ENCODE measurements at regions of chr1 and their contacts with region 1.

Region 1: GRCh38 chr1:92831762-92832536 is at the start of gene RPL5:
- DNase-seq: peak; percentile 93 to 99 (median 97)
- ATAC-seq: peak; percentile 86
- H3K4me3 ChIP-seq: peak within 1 kb of the TSS; percentile 96 to 100
- H3K4me3 Mint-ChIP-seq: peak within 1 kb of the TSS; percentile 98
- H3K27ac ChIP-seq: peak within 1 kb of the TSS; percentile 84 to 98
- H3K27ac Mint-ChIP-seq: peak within 1 kb of the TSS; percentile 99
- H3K4me1 ChIP-seq: peaks cover 37% of the 10 kb centered on the region
- H3K4me1 Mint-ChIP-seq: peaks cover 49% of the 10 kb centered on the region
- H3K27me3 ChIP-seq: no peaks in the 10 kb centered on the region
- H3K27me3 Mint-ChIP-seq: no peaks in the 10 kb centered on the region
- CTCF ChIP-seq: peak; percentile 90
- total RNA-seq, gene RPL5: 1,826 to 1,914 TPM

Region 2: GRCh38 chr1:92298573-92299476 is 533.1 kb before region 1 on chr1 and contains the starts of genes GLMN and RPAP2:
- CTCF ChIA-PET with region 1: no interaction called
- POLR2A ChIA-PET with region 1: no interaction called
- intact Hi-C with region 1: loop called (anchors 5 to 10 kb)
- DNase-seq: peak; percentile 41 to 88 (median 68)
- ATAC-seq: peak; percentile 96
- H3K4me3 ChIP-seq: peak within 1 kb of the TSS; percentile 76 to 90
- H3K4me3 Mint-ChIP-seq: peak within 1 kb of the TSS; percentile 94
- H3K27ac ChIP-seq: peak within 1 kb of the TSS; percentile 74 to 93
- H3K27ac Mint-ChIP-seq: peak within 1 kb of the TSS; percentile 98
- H3K4me1 ChIP-seq: peaks cover 13% of the 10 kb centered on the region
- H3K4me1 Mint-ChIP-seq: peaks cover 52% of the 10 kb centered on the region
- H3K27me3 ChIP-seq: no peaks in the 10 kb centered on the region
- H3K27me3 Mint-ChIP-seq: no peaks in the 10 kb centered on the region
- CTCF ChIP-seq: no peak
- total RNA-seq, gene GLMN: 9.2 to 9.5 TPM
- total RNA-seq, gene RPAP2: 29.4 to 33.9 TPM

Region 3: DNA sequence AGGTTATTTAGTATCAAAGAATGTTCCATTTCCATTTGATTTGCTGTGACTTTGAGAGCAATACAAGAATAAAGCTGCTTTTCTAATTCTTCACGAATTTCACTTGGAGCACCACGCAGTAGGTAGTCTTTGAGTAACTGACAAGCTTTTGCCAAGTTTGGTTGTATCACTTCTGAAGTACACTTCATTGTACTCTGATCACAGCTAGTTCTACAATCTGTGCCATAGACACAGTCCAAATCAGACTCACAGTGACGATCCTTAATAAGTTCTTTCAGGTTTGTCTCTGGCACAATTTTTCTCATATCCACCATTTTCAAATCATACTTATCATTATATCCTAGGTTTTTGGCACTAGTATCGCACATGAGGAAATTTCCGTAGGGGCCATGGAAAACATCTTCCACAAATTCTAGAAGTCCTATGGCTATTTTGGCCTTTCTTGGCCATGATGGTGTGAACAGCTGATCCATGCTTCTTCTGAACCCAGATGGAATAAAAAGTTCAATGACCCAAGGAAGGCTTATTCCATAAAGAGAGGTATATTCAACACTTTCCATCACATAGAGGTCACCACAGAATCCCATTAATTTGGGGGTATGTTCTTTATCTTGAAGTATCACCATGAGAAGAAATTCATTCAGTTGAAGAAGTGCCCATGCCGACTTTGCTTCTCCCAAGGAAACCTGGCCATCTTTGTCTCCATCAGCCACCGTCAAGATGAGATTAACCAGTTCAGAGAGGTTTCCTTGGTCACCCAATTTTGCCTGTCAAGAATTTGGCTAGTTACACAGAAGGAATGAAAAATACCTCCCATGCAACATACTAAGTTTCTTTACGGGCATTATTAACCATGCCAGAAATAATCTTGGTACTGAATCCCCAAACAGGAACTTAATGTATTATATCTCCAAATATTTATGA is 11.7 kb after region 1 on chr1:
- CTCF ChIA-PET with region 1: interaction called, 15 read pairs
- POLR2A ChIA-PET with region 1: interaction called, 12 read pairs
- intact Hi-C with region 1: no loop called
- DNase-seq: no peak
- ATAC-seq: no peak
- H3K4me3 ChIP-seq: no peak overlapping the region
- H3K4me3 Mint-ChIP-seq: no peak overlapping the region
- H3K27ac ChIP-seq: no peak overlapping the region
- H3K27ac Mint-ChIP-seq: peak overlapping the region; percentile 22
- H3K4me1 ChIP-seq: peaks cover 12% of the 10 kb centered on the region
- H3K4me1 Mint-ChIP-seq: peaks cover 24% of the 10 kb centered on the region
- H3K27me3 ChIP-seq: no peaks in the 10 kb centered on the region
- H3K27me3 Mint-ChIP-seq: no peaks in the 10 kb centered on the region
- CTCF ChIP-seq: no peak

Region 4: DNA sequence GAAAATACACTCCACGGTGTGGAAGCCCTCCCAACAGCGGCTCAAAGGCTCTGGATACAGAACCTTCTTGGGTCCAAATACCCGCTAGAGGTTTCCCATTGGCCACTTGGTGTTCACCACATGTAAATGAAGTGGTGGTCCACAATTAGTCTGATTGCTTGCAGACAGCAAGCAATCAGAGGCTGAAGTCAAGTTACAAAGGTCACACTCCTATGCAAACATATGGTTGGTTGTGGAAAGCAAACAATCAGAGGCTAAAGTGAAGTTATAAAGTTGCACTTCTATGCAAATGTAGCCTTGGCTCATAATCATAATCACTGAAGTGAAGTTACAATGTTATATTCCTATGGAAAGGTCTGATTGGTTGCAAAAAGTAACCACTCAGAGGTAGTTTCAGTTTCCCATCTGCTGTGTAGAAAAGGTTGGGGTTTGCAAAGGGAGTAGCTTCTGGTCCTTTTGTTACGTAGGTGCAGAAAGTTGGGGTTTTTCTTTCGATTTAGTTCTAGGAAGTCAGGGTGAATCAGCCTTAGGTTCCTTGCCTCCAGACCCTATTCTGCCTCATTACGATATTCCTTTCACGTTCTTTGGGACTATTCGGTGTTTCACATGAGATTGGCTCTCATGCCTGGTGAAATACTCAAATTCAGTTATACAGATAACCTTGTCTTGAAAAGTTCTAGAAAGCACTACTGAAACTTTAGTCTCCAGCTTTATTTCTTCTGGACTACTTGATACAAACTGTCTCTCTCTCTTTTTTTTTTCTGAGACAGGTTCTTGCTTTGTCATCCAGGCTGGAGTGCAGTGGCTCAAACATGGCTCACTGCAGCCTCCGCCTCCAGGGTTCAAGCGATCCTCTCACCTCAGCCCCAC is 210.5 kb after region 1 on chr1:
- CTCF ChIA-PET with region 1: no interaction called
- POLR2A ChIA-PET with region 1: interaction called, 7 read pairs
- intact Hi-C with region 1: loop called in 1 of 2 experiments (anchors 2 kb)
- DNase-seq: peak in 6 of 9 experiments; percentile 11 to 92 (median 20)
- ATAC-seq: peak; percentile 99
- H3K4me3 ChIP-seq: peak overlapping the region; percentile 32 to 44
- H3K4me3 Mint-ChIP-seq: peak overlapping the region; percentile 83
- H3K27ac ChIP-seq: peak overlapping the region; percentile 40 to 93
- H3K27ac Mint-ChIP-seq: peak overlapping the region; percentile 95
- H3K4me1 ChIP-seq: peaks cover 12% of the 10 kb centered on the region
- H3K4me1 Mint-ChIP-seq: peaks cover 13% of the 10 kb centered on the region
- H3K27me3 ChIP-seq: no peaks in the 10 kb centered on the region
- H3K27me3 Mint-ChIP-seq: no peaks in the 10 kb centered on the region
- CTCF ChIP-seq: no peak

Region 5: DNA sequence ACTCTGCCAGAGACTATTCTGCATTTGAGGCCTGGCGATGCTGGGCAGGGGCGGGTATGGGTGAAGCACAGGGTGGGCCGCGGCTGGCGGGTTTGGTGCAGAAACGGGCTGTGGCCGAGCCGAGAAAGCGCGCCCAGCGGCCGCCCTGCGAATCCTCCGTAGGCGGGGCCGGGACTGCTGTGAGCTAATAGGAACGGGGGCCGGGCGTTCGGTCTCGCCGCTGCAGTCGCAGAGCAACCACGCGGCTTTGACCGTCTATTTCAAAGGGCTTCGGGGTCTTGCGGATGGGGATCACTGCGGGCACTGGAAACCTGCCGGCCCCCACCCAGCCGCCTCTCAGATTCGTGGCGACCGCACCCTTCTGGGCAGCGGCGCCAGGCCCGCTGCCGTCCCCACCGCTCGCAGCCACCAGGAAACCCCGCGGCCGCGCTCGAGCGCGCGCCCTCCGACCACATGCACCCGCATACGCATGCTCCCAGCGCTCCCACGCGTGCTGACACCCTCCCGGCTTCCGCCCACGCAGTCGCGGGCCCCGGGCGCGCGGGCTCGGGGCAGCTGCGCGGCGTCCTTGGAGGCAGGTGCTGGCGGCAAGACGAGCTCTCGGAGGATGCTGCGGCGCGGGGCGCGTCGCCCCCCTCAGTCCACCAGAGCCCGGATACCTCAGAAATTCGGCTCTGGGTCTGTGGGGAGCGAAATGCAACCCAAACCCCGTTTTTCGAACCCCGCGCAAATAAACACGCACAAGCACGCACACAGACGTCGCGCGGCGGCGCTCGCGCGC is 1014.5 kb after region 1 on chr1:
- CTCF ChIA-PET with region 1: interaction called, 7 read pairs
- POLR2A ChIA-PET with region 1: interaction called, 3 read pairs
- intact Hi-C with region 1: loop called (anchors 5 kb)
- DNase-seq: peak; percentile 74 to 94 (median 83)
- ATAC-seq: peak; percentile 33
- H3K4me3 ChIP-seq: peak overlapping the region; percentile 82 to 98
- H3K4me3 Mint-ChIP-seq: peak overlapping the region; percentile 94
- H3K27ac ChIP-seq: peak overlapping the region; percentile 86 to 91
- H3K27ac Mint-ChIP-seq: peak overlapping the region; percentile 96
- H3K4me1 ChIP-seq: peaks cover 21% of the 10 kb centered on the region
- H3K4me1 Mint-ChIP-seq: peaks cover 31% of the 10 kb centered on the region
- H3K27me3 ChIP-seq: no peaks in the 10 kb centered on the region
- H3K27me3 Mint-ChIP-seq: no peaks in the 10 kb centered on the region
- CTCF ChIP-seq: no peak